ENCODE measurements at regions of chr4 and their contacts with region 1.

Region 1: DNA sequence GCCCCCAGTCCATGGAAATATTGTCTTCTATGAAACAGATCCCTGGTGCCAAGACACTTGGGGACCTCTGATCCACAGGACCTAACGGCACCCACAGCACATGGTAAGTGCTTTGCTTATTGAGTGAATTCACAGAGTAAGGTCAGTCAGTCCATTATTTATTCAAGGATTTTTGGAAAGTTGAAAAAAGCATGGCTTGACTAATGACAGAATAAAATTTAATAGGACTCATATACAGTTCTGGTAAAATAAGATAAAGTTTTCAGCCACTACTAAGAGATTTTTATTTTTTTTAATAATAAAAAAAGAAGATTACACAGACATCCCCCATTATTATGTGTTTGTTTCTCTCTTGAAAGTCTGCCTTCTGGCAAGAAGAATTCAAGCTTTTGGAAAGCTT is 490.6 kb upstream of the HS3ST1 start:
- DNase-seq: no peak
- H3K4me3 ChIP-seq: no peak overlapping the region
- H3K27ac ChIP-seq: no peak overlapping the region
- H3K4me1 ChIP-seq: no peaks in the 10 kb centered on the region
- H3K27me3 ChIP-seq: no peaks in the 10 kb centered on the region
- CTCF ChIP-seq: no peak
- POLR2A ChIP-seq: no peak

Region 2: GRCh38 chr4:11367371-11367770 is 551.9 kb before region 1 on chr4:
- intact Hi-C with region 1: no loop called
- DNase-seq: peak in 1 of 2 donors; percentile 88
- H3K4me3 ChIP-seq: no peak overlapping the region
- H3K27ac ChIP-seq: peak overlapping the region; percentile 60 to 65
- H3K4me1 ChIP-seq: peaks cover 0 to 10% of the 10 kb centered on the region in 2 donors
- H3K27me3 ChIP-seq: no peaks in the 10 kb centered on the region
- CTCF ChIP-seq: no peak
- POLR2A ChIP-seq: no peak

Region 3: GRCh38 chr4:11774346-11774745 is 145.0 kb before region 1 on chr4:
- intact Hi-C with region 1: no loop called
- DNase-seq: no peak
- H3K4me3 ChIP-seq: no peak overlapping the region
- H3K27ac ChIP-seq: no peak overlapping the region
- H3K4me1 ChIP-seq: no peaks in the 10 kb centered on the region
- H3K27me3 ChIP-seq: no peaks in the 10 kb centered on the region
- CTCF ChIP-seq: no peak
- POLR2A ChIP-seq: no peak

Region 4: GRCh38 chr4:11866391-11866790 is 52.9 kb before region 1 on chr4:
- intact Hi-C with region 1: loop called (anchors 2 kb)
- DNase-seq: no peak
- H3K4me3 ChIP-seq: no peak overlapping the region
- H3K27ac ChIP-seq: no peak overlapping the region
- H3K4me1 ChIP-seq: no peaks in the 10 kb centered on the region
- H3K27me3 ChIP-seq: no peaks in the 10 kb centered on the region
- CTCF ChIP-seq: no peak
- POLR2A ChIP-seq: no peak

Region 5: DNA sequence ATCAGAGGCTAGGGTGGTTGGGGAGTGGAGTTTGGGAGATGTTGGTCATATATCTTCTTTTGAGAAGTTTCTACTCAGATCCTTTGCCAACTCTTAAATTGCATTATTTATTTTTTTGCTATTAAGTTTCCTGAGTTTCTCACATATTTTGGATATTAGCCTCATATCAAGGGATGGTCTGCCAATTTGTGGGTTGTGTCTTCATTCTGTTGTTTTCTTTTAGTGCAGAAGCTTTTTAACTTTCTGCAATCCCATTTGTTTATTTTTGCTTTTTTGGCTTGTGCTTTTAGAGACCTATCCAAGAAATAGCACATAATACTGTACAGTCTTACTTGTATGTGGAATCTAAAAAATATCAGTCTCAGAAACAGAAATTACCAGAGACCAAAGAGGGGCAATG is 18.6 kb after region 1 on chr4:
- intact Hi-C with region 1: no loop called
- DNase-seq: no peak
- H3K4me3 ChIP-seq: no peak overlapping the region
- H3K27ac ChIP-seq: no peak overlapping the region
- H3K4me1 ChIP-seq: no peaks in the 10 kb centered on the region
- H3K27me3 ChIP-seq: no peaks in the 10 kb centered on the region
- CTCF ChIP-seq: no peak
- POLR2A ChIP-seq: no peak

Measured in breast epithelium (tissue), 4 donors.